Activated T-helper 1 cell treated with anti-CD3 and anti-CD28 coated beads, Interleukin-12 subunit alpha, Interleukin-12 subunit beta, Interleukin-2, Interleukin-4 antibody, amounts not matched to agents 30 ng/mL and 10 ng/mL and 1 ng/mL, durations not matched to agents 14 hours and 24 hours and 36 hours (primary cell): ENCODE measurements at regions of chr5 and their contacts with region 1.

Region 1: DNA sequence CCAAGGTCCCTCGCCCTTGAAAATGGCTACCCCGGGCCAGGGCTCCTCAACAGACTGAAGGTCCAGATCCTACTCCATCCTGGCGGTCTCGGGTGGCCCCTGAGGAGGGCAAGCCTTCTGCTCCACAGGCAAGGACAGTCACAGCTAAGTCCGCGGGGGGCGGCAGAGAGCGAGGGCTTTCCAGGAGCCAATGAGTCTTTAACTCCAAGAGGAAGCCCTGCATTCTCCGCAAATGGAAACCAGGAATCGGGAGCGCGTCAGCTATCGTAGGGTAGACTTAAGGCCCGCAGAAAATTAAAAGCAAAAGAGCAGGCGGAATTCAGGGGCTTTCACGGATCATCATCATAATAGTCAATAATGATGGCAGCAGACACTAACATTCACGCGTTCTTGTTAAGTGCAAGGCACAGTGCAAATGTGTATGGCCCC is 87.8 kb upstream of the TNFAIP8 start:
- DNase-seq: peak; percentile 72
- H3K4me3 Mint-ChIP-seq: peak overlapping the region; percentile 99
- H3K27ac Mint-ChIP-seq: peak overlapping the region; percentile 97
- H3K4me1 Mint-ChIP-seq: peaks cover 55% of the 10 kb centered on the region
- H3K27me3 Mint-ChIP-seq: no peaks in the 10 kb centered on the region

Region 2: GRCh38 chr5:119105971-119106370 is 162.0 kb before region 1 on chr5:
- intact Hi-C with region 1: no loop called
- DNase-seq: no peak
- H3K4me3 Mint-ChIP-seq: no peak overlapping the region
- H3K27ac Mint-ChIP-seq: no peak overlapping the region
- H3K4me1 Mint-ChIP-seq: no peaks in the 10 kb centered on the region
- H3K27me3 Mint-ChIP-seq: no peaks in the 10 kb centered on the region

Region 3: GRCh38 chr5:119280380-119280779 is 12.4 kb after region 1 on chr5:
- intact Hi-C with region 1: no loop called
- DNase-seq: no peak
- H3K4me3 Mint-ChIP-seq: no peak overlapping the region
- H3K27ac Mint-ChIP-seq: no peak overlapping the region
- H3K4me1 Mint-ChIP-seq: peaks cover 100% of the 10 kb centered on the region
- H3K27me3 Mint-ChIP-seq: no peaks in the 10 kb centered on the region

Region 4: DNA sequence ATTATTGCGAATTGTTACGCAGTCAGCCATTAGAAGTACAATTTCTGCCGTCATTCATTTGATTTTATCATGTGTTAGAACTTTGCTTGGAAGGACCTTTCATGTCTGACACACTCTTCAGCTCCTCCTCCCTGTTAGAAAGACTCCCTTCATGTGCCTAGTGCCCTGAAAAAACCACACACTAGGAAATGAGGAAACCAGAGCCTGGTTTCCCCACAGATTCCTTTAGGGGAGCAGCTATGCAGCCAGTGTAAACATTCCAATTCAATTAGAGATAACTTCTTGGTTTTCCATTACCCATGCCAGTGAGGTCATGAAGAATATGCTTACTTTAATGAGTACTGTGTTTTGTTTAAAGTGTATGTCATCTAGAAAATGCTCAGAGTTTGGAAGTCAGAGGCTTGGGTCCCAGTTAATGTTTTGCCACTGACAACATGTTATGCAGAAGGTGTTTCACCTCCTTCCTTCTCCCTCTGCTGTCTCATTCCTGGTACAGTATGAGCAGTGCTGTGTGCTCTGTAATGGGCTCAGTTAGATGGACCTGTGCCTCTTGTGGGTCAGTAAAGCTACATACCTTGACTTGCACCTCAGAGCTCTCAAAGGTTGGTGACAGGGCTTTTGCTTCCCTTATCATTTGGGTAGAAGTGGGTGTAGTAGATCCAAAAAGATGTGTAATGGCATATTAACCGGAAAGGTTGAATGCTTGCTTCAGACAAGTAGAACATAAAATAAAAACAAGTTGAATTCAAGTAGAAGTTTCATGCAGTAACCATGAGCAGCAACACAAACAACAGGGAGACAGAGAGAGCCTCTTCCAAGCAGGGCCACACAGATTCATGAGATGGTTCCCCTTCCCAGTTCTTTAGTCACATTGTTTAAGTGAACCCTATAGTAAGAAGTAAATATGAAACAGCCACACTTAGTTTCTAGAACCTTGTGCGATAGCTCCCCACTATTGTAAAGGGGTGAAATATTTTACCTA is 35.2 kb after region 1 on chr5:
- intact Hi-C with region 1: loop called (anchors 1 kb)
- DNase-seq: no peak
- H3K4me3 Mint-ChIP-seq: peak overlapping the region; percentile 48
- H3K27ac Mint-ChIP-seq: peak overlapping the region; percentile 73
- H3K4me1 Mint-ChIP-seq: peaks cover 87% of the 10 kb centered on the region
- H3K27me3 Mint-ChIP-seq: no peaks in the 10 kb centered on the region

Region 5: GRCh38 chr5:119328753-119329602 is 61.0 kb after region 1 on chr5:
- intact Hi-C with region 1: loop called (anchors 1 kb)
- DNase-seq: peak; percentile 52
- H3K4me3 Mint-ChIP-seq: peak overlapping the region; percentile 52
- H3K27ac Mint-ChIP-seq: peak overlapping the region; percentile 95
- H3K4me1 Mint-ChIP-seq: peaks cover 91% of the 10 kb centered on the region
- H3K27me3 Mint-ChIP-seq: no peaks in the 10 kb centered on the region

Region 6: GRCh38 chr5:119411935-119412602 is 144.1 kb after region 1 on chr5:
- intact Hi-C with region 1: loop called (anchors 1 kb)
- DNase-seq: peak; percentile 36
- H3K4me3 Mint-ChIP-seq: peak overlapping the region; percentile 84
- H3K27ac Mint-ChIP-seq: peak overlapping the region; percentile 38
- H3K4me1 Mint-ChIP-seq: peaks cover 35% of the 10 kb centered on the region
- H3K27me3 Mint-ChIP-seq: peaks cover 4% of the 10 kb centered on the region

Region 7: GRCh38 chr5:119583684-119584083 is 315.7 kb after region 1 on chr5:
- intact Hi-C with region 1: no loop called
- DNase-seq: no peak
- H3K4me3 Mint-ChIP-seq: no peak overlapping the region
- H3K27ac Mint-ChIP-seq: no peak overlapping the region
- H3K4me1 Mint-ChIP-seq: no peaks in the 10 kb centered on the region
- H3K27me3 Mint-ChIP-seq: peaks cover 6% of the 10 kb centered on the region